Mammary epithelial cell (primary cell): ENCODE measurements at regions of chr11 and their contacts with region 1.

Region 1: GRCh38 chr11:12390687-12391110 is 13.3 kb downstream of the PARVA start:
- DNase-seq: no peak
- H3K4me3 ChIP-seq: no peak overlapping the region
- H3K27ac ChIP-seq: peak overlapping the region; percentile 82
- H3K4me1 ChIP-seq: peaks cover 45% of the 10 kb centered on the region
- H3K27me3 ChIP-seq: no peaks in the 10 kb centered on the region
- CTCF ChIP-seq: no peak

Region 2: GRCh38 chr11:12377824-12378593 is 12.7 kb before region 1 on chr11:
- CTCF ChIA-PET with region 1: no interaction called
- dilution Hi-C with region 1: no loop called
- in situ Hi-C with region 1: no loop called
- intact Hi-C with region 1: loop called (anchors 1 kb)
- DNase-seq: peak; percentile 81
- H3K4me3 ChIP-seq: peak overlapping the region; percentile 63 to 74 (median 71)
- H3K27ac ChIP-seq: peak overlapping the region; percentile 93
- H3K4me1 ChIP-seq: peaks cover 28% of the 10 kb centered on the region
- H3K27me3 ChIP-seq: no peaks in the 10 kb centered on the region
- CTCF ChIP-seq: no peak

Region 3: GRCh38 chr11:12430955-12431354 is 40.3 kb after region 1 on chr11:
- CTCF ChIA-PET with region 1: no interaction called
- dilution Hi-C with region 1: loop called (anchors 5 kb)
- in situ Hi-C with region 1: no loop called
- intact Hi-C with region 1: no loop called
- DNase-seq: peak; percentile 90
- H3K4me3 ChIP-seq: peak overlapping the region in 2 of 3 experiments; percentile 37 to 42
- H3K27ac ChIP-seq: peak overlapping the region; percentile 99
- H3K4me1 ChIP-seq: peaks cover 24% of the 10 kb centered on the region
- H3K27me3 ChIP-seq: no peaks in the 10 kb centered on the region
- CTCF ChIP-seq: no peak